Transverse colon (tissue), 4 donors: ENCODE measurements at regions of chr1 and their contacts with region 1.

Region 1: DNA sequence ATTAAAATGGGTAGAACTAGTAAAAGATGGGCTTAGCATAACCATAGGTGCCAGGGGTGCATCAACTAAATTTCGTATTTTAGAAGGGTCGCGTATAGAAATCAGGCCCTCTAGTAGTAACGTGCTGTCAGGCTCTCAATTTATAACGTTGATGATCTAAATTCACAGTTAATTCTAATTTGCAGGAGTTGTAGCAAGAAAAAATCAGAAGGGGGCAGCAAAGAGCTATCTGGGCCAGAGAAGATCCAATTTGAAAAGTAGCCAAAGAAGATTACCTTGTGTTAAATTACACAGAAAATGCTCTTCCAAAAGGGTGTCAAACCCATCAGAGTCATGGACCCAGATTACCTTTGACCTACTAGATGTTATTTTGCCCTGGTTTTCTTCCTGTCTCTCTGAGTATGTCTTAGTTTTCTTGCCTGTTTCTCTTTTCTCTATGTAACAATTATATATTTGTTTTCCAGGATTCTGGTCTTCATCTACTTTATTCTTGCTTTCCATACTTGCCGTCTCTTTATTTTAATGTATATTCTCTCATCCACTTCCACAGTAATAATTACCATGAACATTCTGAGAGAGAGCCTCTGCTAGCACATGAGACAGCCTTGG is 1030.9 kb downstream of the AMY1C start:
- DNase-seq: no peak
- H3K4me3 ChIP-seq: no peak overlapping the region
- H3K27ac ChIP-seq: no peak overlapping the region
- H3K4me1 ChIP-seq: no peaks in the 10 kb centered on the region
- H3K27me3 ChIP-seq: no peaks in the 10 kb centered on the region
- CTCF ChIP-seq: peak; percentile 55 to 70 (median 64)
- EP300 ChIP-seq: no peak
- POLR2A ChIP-seq: no peak

Region 2: GRCh38 chr1:104435255-104435654 is 345.3 kb before region 1 on chr1:
- in situ Hi-C with region 1: no loop called
- intact Hi-C with region 1: no loop called
- DNase-seq: no peak
- H3K4me3 ChIP-seq: no peak overlapping the region
- H3K27ac ChIP-seq: no peak overlapping the region
- H3K4me1 ChIP-seq: no peaks in the 10 kb centered on the region
- H3K27me3 ChIP-seq: no peaks in the 10 kb centered on the region
- CTCF ChIP-seq: no peak
- EP300 ChIP-seq: no peak
- POLR2A ChIP-seq: no peak

Region 3: GRCh38 chr1:105072850-105073249 is 292.3 kb after region 1 on chr1:
- in situ Hi-C with region 1: no loop called
- intact Hi-C with region 1: no loop called
- DNase-seq: no peak
- H3K4me3 ChIP-seq: no peak overlapping the region
- H3K27ac ChIP-seq: no peak overlapping the region
- H3K4me1 ChIP-seq: no peaks in the 10 kb centered on the region
- H3K27me3 ChIP-seq: no peaks in the 10 kb centered on the region
- CTCF ChIP-seq: no peak
- EP300 ChIP-seq: no peak
- POLR2A ChIP-seq: no peak

Region 4: DNA sequence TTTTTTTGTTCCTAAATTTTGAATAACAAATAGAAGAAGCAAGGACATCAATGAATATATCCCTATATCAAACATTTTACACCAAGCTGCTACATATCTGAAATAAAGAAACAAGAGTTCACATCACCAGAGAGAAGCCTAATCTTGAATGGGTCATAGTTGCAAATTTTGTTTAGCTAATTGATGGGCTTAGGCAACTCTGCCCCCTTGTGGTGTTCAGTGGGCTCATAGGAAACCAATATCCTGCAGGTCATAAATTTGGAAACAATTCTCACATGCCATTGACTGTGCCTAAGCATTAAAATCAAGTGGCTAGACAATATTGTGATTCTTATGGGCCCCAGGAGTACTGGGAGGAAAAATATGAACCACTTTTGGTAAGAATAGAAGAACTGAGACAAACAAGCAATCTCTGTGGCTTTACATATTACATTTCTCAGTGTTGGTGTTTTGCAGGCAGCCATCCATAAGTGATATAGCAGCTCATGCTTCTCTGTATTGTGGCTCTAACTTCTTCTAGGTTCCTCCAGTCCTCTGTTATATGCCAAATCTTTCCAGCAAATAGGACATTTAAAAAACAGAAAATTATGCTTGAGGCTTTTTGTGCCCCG is 1013.1 kb after region 1 on chr1:
- in situ Hi-C with region 1: loop called in 2 of 4 experiments (anchors 25 kb)
- intact Hi-C with region 1: no loop called
- DNase-seq: peak; percentile 27
- H3K4me3 ChIP-seq: no peak overlapping the region
- H3K27ac ChIP-seq: no peak overlapping the region
- H3K4me1 ChIP-seq: no peaks in the 10 kb centered on the region
- H3K27me3 ChIP-seq: no peaks in the 10 kb centered on the region
- CTCF ChIP-seq: peak; percentile 32 to 54 (median 52)
- EP300 ChIP-seq: no peak
- POLR2A ChIP-seq: no peak